ENCODE measurements at regions of chr17 and their contacts with region 1.

Region 1: DNA sequence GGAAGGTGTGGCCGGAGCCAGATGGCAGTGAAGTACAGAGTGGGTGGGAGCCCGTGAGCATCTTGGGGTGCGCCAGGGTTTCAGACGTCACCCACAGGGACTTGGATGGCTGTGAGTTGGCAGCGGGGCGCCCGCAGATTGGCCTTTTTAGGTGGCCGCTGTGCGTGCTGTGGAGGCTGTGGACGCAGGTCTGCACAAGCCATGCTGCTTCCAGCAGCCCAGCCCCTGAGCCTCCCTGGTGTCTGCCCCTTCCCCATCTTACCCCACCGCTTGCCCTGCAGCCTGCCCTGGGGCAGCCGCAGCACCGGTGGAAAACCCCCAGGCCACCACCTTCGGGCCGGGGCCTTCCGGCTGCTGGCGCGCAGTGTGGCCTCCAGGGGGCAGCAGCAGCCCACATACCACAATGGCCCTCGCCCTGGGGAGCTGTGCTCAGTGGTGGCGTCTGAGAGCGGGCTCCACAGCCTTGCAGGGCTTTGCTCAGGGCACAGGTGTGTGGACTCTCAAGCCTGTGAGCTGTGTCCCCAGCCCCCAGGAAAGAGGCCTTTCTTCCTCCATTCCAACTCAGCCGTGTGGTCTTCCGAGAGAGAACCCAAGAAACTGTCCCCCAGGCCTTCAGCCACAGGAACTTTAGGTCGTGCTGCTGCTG is 11.8 kb downstream of the ENDOV start:
- DNase-seq: peak; percentile 33
- H3K4me3 ChIP-seq: no peak overlapping the region
- H3K27ac ChIP-seq: no peak overlapping the region
- H3K4me1 ChIP-seq: no peaks in the 10 kb centered on the region
- H3K27me3 ChIP-seq: no peaks in the 10 kb centered on the region
- CTCF ChIP-seq: peak; percentile 91 to 98 (median 96)
- POLR2A ChIP-seq: no peak

Region 2: GRCh38 chr17:80124351-80124981 is 302.3 kb before region 1 on chr17:
- intact Hi-C with region 1: no loop called
- DNase-seq: peak; percentile 60
- H3K4me3 ChIP-seq: no peak overlapping the region
- H3K27ac ChIP-seq: peak overlapping the region; percentile 50
- H3K4me1 ChIP-seq: peaks cover under 1% of the 10 kb centered on the region
- H3K27me3 ChIP-seq: no peaks in the 10 kb centered on the region
- CTCF ChIP-seq: peak in 2 of 4 experiments; percentile 26 to 38
- POLR2A ChIP-seq: no peak

Region 3: DNA sequence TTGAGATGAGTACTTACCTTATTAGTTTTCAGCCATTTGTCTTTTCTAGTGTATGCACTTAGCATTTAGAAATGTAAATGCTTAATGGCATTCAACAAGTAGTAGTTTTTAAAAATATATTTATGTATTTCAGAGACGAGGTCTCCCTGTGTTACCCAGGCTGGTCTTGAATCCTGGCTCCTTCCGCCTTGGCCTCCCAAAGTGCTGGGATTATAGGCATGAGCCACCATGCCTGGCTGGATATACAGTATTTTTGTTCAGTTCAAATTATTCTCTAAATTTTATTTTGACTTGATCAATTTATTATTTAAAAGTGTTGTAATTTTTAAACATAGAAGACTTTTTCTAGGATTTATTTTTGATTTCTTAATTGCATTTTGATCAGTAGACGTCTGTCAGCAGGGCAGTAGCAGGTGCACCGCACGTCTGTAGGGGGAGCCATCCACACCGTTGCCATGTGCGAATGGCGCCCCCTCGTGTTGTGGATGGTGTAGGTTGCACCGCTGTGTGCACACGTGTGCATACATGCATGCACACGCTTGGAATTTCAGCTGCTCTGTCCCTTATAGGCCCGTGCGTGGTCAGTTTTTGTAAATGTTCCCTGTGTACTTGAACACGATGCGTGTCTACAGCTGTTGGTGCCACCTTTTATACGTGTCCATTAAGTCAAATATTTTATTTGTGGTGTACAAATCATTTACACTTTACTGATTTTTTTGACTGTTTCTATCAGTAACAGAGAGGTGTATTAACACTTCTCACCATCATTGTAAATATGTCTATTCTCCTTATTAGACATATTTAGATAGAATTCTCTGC is 148.5 kb after region 1 on chr17:
- intact Hi-C with region 1: loop called (anchors 5 kb)
- DNase-seq: peak; percentile 43
- H3K4me3 ChIP-seq: no peak overlapping the region
- H3K27ac ChIP-seq: no peak overlapping the region
- H3K4me1 ChIP-seq: no peaks in the 10 kb centered on the region
- H3K27me3 ChIP-seq: no peaks in the 10 kb centered on the region
- CTCF ChIP-seq: peak; percentile 33 to 89 (median 86)
- POLR2A ChIP-seq: no peak

Region 4: GRCh38 chr17:80656590-80656989 is 229.8 kb after region 1 on chr17:
- intact Hi-C with region 1: loop called (anchors 5 kb)
- DNase-seq: no peak
- H3K4me3 ChIP-seq: no peak overlapping the region
- H3K27ac ChIP-seq: no peak overlapping the region
- H3K4me1 ChIP-seq: no peaks in the 10 kb centered on the region
- H3K27me3 ChIP-seq: no peaks in the 10 kb centered on the region
- CTCF ChIP-seq: no peak
- POLR2A ChIP-seq: no peak

Region 5: GRCh38 chr17:80866147-80866793 is 439.5 kb after region 1 on chr17:
- intact Hi-C with region 1: loop called (anchors 5 kb)
- DNase-seq: peak; percentile 44
- H3K4me3 ChIP-seq: no peak overlapping the region
- H3K27ac ChIP-seq: no peak overlapping the region
- H3K4me1 ChIP-seq: no peaks in the 10 kb centered on the region
- H3K27me3 ChIP-seq: no peaks in the 10 kb centered on the region
- CTCF ChIP-seq: peak; percentile 32 to 71 (median 56)
- POLR2A ChIP-seq: no peak

Region 6: DNA sequence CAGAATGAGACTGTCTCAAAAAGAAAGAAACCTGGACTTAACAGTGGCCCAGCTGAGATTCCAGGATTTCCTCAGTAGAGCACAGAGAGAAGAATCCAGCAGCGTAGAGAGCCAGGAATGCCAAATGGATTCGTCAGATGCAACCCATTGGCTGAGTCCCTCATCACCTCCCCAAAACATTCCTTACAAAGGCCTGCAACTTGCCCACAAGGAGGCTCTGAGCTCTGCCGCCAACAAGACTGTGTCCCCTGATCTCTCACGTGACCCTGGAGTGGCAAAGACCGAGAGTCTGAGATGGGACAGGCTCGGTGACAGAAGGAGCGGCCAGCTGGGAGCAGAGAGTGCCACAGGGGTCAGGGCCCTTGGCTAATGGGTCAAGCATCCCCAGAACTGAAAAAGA is 557.9 kb after region 1 on chr17:
- intact Hi-C with region 1: loop called (anchors 2 kb)
- DNase-seq: no peak
- H3K4me3 ChIP-seq: no peak overlapping the region
- H3K27ac ChIP-seq: no peak overlapping the region
- H3K4me1 ChIP-seq: peaks cover 8% of the 10 kb centered on the region
- H3K27me3 ChIP-seq: no peaks in the 10 kb centered on the region
- CTCF ChIP-seq: no peak
- POLR2A ChIP-seq: no peak

Measured in prostate gland (tissue), 2 donors.